ENCODE measurements at regions of chr11 and their contacts with region 1.

Region 1: GRCh38 chr11:33829433-33830141 is 55.3 kb upstream of the FBXO3 start:
- DNase-seq: peak; percentile 81
- CTCF ChIP-seq: peak; percentile 80

Region 2: GRCh38 chr11:33716236-33716635 is 113.4 kb before region 1 on chr11:
- CTCF ChIA-PET with region 1: interaction called, 32 read pairs
- POLR2A ChIA-PET with region 1: no interaction called
- DNase-seq: no peak
- CTCF ChIP-seq: peak; percentile 63

Region 3: DNA sequence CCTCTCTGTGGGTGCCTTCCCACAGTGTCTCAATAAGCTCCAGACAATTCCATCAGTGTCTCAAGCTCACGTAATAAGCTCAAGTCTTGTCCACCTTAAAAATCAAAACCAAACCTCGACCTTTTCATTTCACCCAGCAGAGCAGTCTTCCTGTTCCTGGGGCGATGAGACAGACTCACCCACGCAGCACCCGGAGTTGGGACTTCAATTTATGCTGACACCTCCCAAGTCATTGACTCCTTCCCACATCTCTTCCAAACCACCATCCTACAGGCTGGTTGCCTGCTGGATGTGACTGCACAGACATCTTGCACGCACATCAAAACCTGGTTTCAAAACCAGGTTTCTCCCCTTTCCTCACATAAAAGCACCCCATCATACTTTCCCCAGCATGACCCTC is 10.3 kb before region 1 on chr11:
- CTCF ChIA-PET with region 1: interaction called, 23 read pairs
- POLR2A ChIA-PET with region 1: no interaction called
- DNase-seq: no peak
- CTCF ChIP-seq: no peak

Measured in GM10248 (cell line).